ENCODE measurements at regions of chr9 and their contacts with region 1.

Region 1: GRCh38 chr9:35732122-35732799 is at the starts of genes CREB3 and TLN1:
- DNase-seq: peak; percentile 98
- H3K4me3 ChIP-seq: peak within 1 kb of the TSS; percentile 98
- H3K27ac ChIP-seq: peak within 1 kb of the TSS; percentile 92
- H3K27me3 ChIP-seq: no peaks in the 10 kb centered on the region
- CTCF ChIP-seq: no peak
- polyA plus RNA-seq, gene CREB3: 51.1 and 58.1 TPM in 2 replicates
- polyA plus RNA-seq, gene TLN1: 165 and 224 TPM in 2 replicates

Region 2: DNA sequence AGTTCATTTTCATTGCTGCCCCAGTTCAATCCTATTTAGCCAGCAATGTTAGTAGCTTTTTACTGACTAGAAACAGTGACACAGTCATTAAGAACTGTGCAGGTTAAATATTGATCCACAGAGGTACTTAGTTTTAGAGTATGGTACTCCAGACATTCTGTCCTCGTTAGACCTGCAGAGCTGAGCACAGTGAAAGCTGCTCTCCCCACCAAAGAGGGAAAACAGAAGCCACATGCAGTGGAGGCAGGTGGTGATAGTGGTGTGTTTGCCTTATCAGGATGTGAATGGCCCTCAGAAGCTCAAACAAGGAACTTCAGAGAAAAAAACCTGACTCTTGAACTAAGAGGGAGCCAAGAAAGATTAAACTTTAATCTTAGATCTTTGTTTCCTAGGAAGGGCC is 494.9 kb before region 1 on chr9:
- CTCF ChIA-PET with region 1: no interaction called
- POLR2A ChIA-PET with region 1: no interaction called
- DNase-seq: no peak
- H3K4me3 ChIP-seq: no peak overlapping the region
- H3K27ac ChIP-seq: no peak overlapping the region
- H3K27me3 ChIP-seq: no peaks in the 10 kb centered on the region
- CTCF ChIP-seq: no peak

Region 3: DNA sequence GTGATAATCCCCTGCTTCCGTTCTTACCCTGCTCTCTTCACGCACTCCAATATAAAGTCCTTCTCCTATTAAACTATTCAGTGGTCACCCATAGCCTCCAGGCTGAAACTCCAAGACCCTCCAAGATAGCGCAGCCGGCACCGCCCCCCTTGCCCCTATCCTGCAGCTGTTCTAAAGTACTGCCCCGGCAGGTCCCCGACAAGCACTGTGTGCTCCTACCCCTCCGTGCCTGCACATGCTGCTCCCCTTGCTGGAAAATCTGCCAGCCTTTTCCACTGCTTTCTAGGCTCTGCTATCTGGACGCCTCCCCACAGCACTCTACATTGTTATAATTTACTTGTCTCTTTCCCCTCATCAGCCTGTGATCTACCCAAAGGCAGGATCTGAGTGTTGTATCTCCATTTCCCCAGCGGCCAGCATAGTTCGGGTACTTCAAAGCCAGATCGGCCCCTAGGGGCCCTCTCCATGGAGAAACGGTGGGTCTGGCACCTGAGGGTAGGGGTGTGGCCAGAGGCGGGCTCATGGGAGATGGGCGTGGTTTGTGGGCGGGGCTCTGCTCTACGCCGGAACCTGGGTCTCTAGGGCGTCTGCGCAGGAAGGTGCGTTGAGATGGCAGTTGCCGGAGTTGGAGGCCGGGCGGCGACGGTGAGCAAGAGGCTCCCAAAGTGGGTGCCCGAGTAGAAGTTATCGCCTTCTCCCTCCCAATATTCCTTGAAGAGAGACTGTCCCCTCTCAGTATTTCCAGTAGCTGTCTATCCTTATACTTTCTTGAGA is 325.9 kb before region 1 on chr9:
- CTCF ChIA-PET with region 1: no interaction called
- POLR2A ChIA-PET with region 1: no interaction called
- DNase-seq: no peak
- H3K4me3 ChIP-seq: no peak overlapping the region
- H3K27ac ChIP-seq: no peak overlapping the region
- H3K27me3 ChIP-seq: peaks cover 2% of the 10 kb centered on the region
- CTCF ChIP-seq: no peak

Region 4: GRCh38 chr9:35646533-35647265 is 85.6 kb before region 1 on chr9:
- CTCF ChIA-PET with region 1: interaction called, 11 read pairs
- POLR2A ChIA-PET with region 1: interaction called, 5 read pairs
- DNase-seq: peak; percentile 66
- H3K4me3 ChIP-seq: peak overlapping the region; percentile 73
- H3K27ac ChIP-seq: peak overlapping the region; percentile 11
- H3K27me3 ChIP-seq: no peaks in the 10 kb centered on the region
- CTCF ChIP-seq: peak; percentile 89

Region 5: DNA sequence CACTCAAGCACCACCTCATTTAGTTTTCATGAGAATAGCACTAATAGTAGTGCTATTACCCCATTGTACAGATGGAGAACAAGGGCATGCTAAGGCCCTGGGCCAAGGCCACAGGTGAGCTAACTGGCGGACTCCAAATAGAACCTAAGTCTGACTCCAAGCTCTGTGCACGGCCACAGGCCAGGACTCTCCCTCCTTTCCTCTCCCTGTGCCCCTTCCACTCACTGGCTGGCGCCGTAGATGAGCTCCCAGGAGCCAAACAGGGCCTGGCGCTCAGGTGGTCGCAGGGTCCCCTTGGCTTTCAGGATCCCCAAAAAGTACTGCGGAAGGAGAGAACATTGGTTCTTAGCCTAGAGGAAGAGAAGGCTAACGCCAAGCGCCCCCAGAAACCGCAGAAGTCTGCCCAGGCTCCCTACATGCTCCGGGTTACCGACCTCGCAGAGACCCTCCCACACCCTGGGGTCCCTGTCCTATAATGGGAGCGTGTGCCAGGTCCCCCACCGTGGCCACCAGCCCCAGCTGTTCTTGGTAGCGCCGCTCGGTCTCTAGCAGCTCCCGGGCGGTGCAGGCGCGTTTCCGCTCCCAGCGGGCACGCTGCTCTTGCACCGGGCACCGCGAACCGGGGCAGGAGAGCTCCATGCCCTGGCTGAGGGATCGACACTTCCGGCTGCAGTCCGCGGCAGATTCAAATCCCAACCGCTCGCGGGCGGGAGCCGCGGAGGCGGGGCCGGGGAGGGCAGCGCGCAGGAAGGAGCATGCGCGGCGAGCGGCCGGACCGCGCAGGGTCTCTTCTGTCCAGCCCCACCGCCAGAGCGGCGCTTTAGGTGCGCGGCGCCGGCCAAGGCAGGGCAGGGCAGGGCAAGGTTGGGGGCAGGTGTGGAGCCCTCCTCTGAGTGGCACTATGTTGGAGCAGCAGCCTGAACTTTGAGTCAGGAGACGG is 67.5 kb before region 1 on chr9 and contains the start of gene ARHGEF39:
- CTCF ChIA-PET with region 1: interaction called, 30 read pairs
- POLR2A ChIA-PET with region 1: interaction called, 9 read pairs
- DNase-seq: no peak
- H3K4me3 ChIP-seq: peak within 1 kb of the TSS; percentile 71
- H3K27ac ChIP-seq: peak within 1 kb of the TSS; percentile 11
- H3K27me3 ChIP-seq: no peaks in the 10 kb centered on the region
- CTCF ChIP-seq: peak; percentile 31
- polyA plus RNA-seq, gene ARHGEF39: 1.1 and 1.2 TPM in 2 replicates

Region 6: DNA sequence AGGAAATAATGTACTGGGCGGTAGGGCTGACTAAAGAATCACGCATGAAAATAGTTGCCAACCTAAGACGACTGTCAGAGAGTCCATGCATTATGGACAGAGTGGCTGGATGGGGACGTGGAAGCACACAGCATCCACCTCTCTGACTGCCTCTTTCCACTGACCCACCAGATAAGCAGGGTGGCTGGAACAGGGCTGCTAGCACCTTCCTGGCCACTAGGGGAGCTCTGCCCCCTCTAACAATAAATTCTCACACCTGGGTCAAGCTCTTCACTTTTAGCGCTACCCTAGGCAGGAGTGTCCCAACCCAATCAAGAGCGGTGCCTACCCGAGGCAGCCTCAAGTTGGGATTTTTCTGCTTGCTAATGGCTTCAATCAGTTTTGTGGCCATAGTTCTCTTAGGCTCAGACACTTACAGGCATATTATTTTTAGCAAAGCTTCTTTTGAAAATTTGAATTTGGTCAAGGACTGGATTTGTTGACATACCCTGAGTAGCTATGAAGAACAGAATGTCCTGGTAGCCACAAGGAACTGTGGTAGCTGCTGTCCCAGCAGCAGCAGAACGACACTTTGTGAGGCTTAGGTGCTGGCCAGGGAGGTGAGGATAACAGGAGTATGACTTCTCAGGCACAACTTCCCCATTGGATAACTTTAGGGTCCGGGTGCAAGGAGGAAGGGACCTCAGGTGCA is 35.6 kb before region 1 on chr9:
- CTCF ChIA-PET with region 1: interaction called, 35 read pairs
- POLR2A ChIA-PET with region 1: interaction called, 101 read pairs
- DNase-seq: no peak
- H3K4me3 ChIP-seq: no peak overlapping the region
- H3K27ac ChIP-seq: no peak overlapping the region
- H3K27me3 ChIP-seq: no peaks in the 10 kb centered on the region
- CTCF ChIP-seq: peak; percentile 86

Region 7: DNA sequence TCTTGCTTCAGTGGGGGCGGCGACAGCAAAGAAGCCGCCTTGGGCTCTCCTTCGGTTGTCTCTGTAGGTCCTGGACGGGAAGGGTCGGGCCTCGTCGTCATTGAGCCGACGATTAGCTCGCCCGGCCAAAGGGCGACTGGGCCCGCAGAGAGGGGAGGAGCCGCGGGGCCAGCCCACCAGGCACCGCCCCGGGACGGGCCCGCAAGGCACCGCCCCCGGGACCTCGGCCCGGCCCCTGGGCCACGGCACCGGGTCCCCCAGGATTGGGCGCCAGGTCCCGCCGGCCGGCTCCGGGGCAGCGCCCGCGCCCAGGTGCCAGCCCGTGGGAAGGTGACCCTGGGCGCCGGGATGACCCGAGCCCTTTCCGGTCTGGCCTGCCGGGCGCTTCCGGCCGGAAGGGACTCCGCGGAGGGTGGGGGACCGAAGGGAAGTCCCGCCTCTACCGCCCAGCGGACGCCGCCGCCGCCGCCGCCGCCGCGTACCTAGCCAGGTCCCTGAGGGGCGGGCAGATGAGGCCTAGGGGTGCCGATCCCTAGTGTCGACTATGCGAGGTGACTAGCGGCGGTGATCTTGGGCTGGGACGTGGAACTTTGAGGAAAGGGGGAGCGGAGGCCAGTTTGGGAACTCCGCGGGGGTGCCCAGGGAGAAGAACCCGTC is 16.7 kb after region 1 on chr9 and contains the starts of genes GBA2 and RGP1:
- CTCF ChIA-PET with region 1: interaction called, 46 read pairs
- POLR2A ChIA-PET with region 1: interaction called, 14 read pairs
- DNase-seq: no peak
- H3K4me3 ChIP-seq: peak within 1 kb of the TSS; percentile 90
- H3K27ac ChIP-seq: peak within 1 kb of the TSS; percentile 31
- H3K27me3 ChIP-seq: no peaks in the 10 kb centered on the region
- CTCF ChIP-seq: no peak
- polyA plus RNA-seq, gene GBA2: 32.9 and 34.7 TPM in 2 replicates
- polyA plus RNA-seq, gene RGP1: 20.2 and 20.7 TPM in 2 replicates